Heart left ventricle (tissue), 16 donors: ENCODE measurements at regions of chr7 and their contacts with region 1.

Region 1: GRCh38 chr7:322111-322671 is 32.2 kb downstream of the FOXL3 start:
- DNase-seq: peak; percentile 46 to 86 (median 61)
- ATAC-seq: peak; percentile 61 to 89 (median 74)
- H3K4me3 ChIP-seq: peak overlapping the region in 3 of 12 donors; percentile 19 to 25 (median 22)
- H3K27ac ChIP-seq: no peak overlapping the region
- H3K4me1 ChIP-seq: peaks cover 0 to 23% (median 0%) of the 10 kb centered on the region in 12 donors
- H3K27me3 ChIP-seq: peaks cover 0 to 13% (median 0%) of the 10 kb centered on the region in 9 donors
- CTCF ChIP-seq: peak; percentile 82 to 99 (median 94)
- POLR2A ChIP-seq: no peak

Region 2: GRCh38 chr7:295155-296154 is 26.7 kb before region 1 on chr7:
- intact Hi-C with region 1: no loop called
- DNase-seq: peak in 1 of 5 donors; percentile 14
- ATAC-seq: no peak
- H3K4me3 ChIP-seq: no peak overlapping the region
- H3K27ac ChIP-seq: no peak overlapping the region
- H3K4me1 ChIP-seq: peaks cover 0 to 5% (median 0%) of the 10 kb centered on the region in 12 donors
- H3K27me3 ChIP-seq: peaks cover 12 to 57% (median 40%) of the 10 kb centered on the region in 9 donors
- CTCF ChIP-seq: no peak
- POLR2A ChIP-seq: no peak

Region 3: GRCh38 chr7:636396-636795 is 314.2 kb after region 1 on chr7:
- intact Hi-C with region 1: loop called in 6 of 10 experiments (anchors 5 to 10 kb)
- DNase-seq: peak in 1 of 5 donors; percentile 46
- ATAC-seq: peak in 3 of 4 donors; percentile 54 to 69 (median 67)
- H3K4me3 ChIP-seq: no peak overlapping the region
- H3K27ac ChIP-seq: no peak overlapping the region
- H3K4me1 ChIP-seq: no peaks in the 10 kb centered on the region
- H3K27me3 ChIP-seq: no peaks in the 10 kb centered on the region
- CTCF ChIP-seq: peak in 11 of 12 donors; percentile 31 to 62 (median 42)
- POLR2A ChIP-seq: no peak

Region 4: GRCh38 chr7:774161-775109 is 452.2 kb after region 1 on chr7:
- intact Hi-C with region 1: loop called (anchors 1 to 5 kb)
- DNase-seq: peak in 3 of 5 donors; percentile 52 to 61 (median 52)
- ATAC-seq: peak in 3 of 4 donors; percentile 24 to 64 (median 44)
- H3K4me3 ChIP-seq: no peak overlapping the region
- H3K27ac ChIP-seq: no peak overlapping the region
- H3K4me1 ChIP-seq: peaks cover 0 to 34% (median 20%) of the 10 kb centered on the region in 12 donors
- H3K27me3 ChIP-seq: no peaks in the 10 kb centered on the region
- CTCF ChIP-seq: peak; percentile 82 to 97 (median 92)
- POLR2A ChIP-seq: no peak

Region 5: DNA sequence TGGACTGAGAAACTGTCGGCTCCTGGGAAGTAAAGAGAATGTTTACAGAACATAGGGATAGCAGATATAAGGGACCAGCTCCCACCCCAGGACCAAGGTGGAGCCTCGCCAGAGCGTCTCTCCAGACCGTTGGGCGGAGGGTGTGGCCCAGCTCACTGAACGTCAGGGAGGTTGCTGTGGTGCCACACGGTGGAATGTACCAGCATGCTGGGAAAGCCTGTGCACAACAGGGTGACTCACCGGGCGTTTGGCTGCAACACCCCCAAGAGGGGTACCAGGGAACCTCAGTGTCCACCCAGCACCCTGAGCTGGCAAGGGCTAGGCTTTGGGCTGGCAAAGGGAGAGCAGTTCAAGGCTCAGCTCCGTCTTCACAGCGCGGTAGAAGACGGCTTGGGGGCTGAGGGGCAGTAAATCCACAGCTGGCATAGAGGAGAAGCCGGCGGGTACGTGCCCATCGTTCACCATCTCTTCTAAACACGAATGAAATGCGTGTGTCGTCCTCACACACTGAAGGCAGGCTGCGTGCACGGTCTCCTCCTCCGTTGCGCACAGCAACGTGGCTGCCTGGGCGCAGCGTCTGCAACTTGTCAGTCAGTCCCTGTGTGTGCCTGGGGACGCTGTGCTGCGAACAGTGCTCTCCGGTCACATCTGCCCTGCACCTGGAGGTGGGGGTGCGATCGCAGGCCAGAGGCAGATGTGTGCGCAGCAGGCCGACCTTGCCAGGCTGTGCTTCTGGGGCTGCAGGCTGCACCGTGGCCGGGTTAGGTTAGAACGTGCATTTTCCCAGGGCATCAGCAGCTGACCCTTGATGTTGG is 545.7 kb after region 1 on chr7:
- intact Hi-C with region 1: loop called in 6 of 10 experiments (anchors 2 to 10 kb)
- DNase-seq: peak; percentile 56 to 89 (median 72)
- ATAC-seq: peak; percentile 83 to 89 (median 84)
- H3K4me3 ChIP-seq: peak overlapping the region in 1 of 12 donors; percentile 4
- H3K27ac ChIP-seq: peak overlapping the region; percentile 33 to 88 (median 74)
- H3K4me1 ChIP-seq: peaks cover 0 to 41% (median 17%) of the 10 kb centered on the region in 12 donors
- H3K27me3 ChIP-seq: no peaks in the 10 kb centered on the region
- CTCF ChIP-seq: peak in 1 of 12 donors; percentile 22
- POLR2A ChIP-seq: no peak